ENCODE measurements at regions of chr6 and their contacts with region 1.

Region 1: GRCh38 chr6:134436281-134436815 is 118.4 kb upstream of the SGK1 start:
- DNase-seq: peak in 1 of 9 donors; percentile 65
- ATAC-seq: peak; percentile 84
- H3K4me3 ChIP-seq: peak overlapping the region; percentile 14
- H3K4me3 Mint-ChIP-seq: peak overlapping the region in 2 of 10 donors; percentile 9 to 81
- H3K27ac ChIP-seq: no peak overlapping the region
- H3K27ac Mint-ChIP-seq: peak overlapping the region in 3 of 9 donors; percentile 6 to 94 (median 81)
- H3K4me1 ChIP-seq: no peaks in the 10 kb centered on the region
- H3K4me1 Mint-ChIP-seq: peaks cover 7 to 49% (median 21%) of the 10 kb centered on the region in 7 donors
- H3K27me3 ChIP-seq: no peaks in the 10 kb centered on the region
- H3K27me3 Mint-ChIP-seq: no peaks in the 10 kb centered on the region

Region 2: DNA sequence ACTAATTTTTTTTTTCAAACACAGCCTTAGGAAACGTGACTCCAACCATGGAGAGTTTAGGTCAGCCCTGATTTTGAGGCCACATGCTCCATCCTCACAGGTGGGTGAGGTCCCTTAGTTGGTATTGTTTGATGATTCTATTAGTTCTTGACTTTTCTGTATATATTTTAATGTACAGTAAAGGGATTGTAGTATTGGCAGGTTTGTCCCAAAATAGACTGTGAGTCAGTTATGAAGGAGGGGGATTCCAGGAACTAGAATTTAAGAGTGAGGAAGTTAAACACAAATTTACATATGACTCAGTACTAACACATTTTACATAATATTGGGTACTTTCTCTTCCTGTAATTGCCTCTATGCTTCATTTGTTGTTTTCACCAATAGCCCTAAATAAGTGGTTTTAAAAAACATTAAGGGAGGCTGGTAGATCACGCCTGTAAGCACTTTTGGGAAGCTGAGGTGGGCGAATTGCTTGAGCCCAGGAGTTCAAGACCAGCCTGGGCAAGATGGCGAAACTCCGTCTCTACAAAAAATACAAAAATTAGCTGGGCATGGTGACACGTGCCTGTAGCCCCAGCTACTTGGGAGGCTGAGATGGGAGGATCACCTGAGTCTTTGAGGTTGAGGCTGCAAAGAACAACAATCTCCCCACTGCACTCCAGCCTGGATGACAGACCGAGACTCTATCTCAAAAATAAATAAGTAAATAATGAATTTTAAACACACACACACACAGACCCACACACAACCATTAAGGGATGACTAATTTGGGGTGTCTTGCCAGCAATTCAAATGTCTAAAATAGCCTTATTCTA is 200.2 kb before region 1 on chr6:
- CTCF ChIA-PET with region 1: no interaction called
- POLR2A ChIA-PET with region 1: no interaction called
- intact Hi-C with region 1: loop called in 1 of 2 experiments (anchors 2 kb)
- DNase-seq: no peak
- ATAC-seq: peak; percentile 69
- H3K4me3 ChIP-seq: no peak overlapping the region
- H3K4me3 Mint-ChIP-seq: peak overlapping the region in 2 of 10 donors; percentile 29 to 48
- H3K27ac ChIP-seq: no peak overlapping the region
- H3K27ac Mint-ChIP-seq: peak overlapping the region in 6 of 9 donors; percentile 6 to 86 (median 43)
- H3K4me1 ChIP-seq: peaks cover 18 to 22% of the 10 kb centered on the region in 2 donors
- H3K4me1 Mint-ChIP-seq: peaks cover 8 to 50% (median 43%) of the 10 kb centered on the region in 7 donors
- H3K27me3 ChIP-seq: no peaks in the 10 kb centered on the region
- H3K27me3 Mint-ChIP-seq: no peaks in the 10 kb centered on the region

Region 3: GRCh38 chr6:134352786-134353480 is 83.4 kb before region 1 on chr6:
- CTCF ChIA-PET with region 1: no interaction called
- POLR2A ChIA-PET with region 1: no interaction called
- intact Hi-C with region 1: loop called in 1 of 2 experiments (anchors 5 kb)
- DNase-seq: no peak
- ATAC-seq: no peak
- H3K4me3 ChIP-seq: no peak overlapping the region
- H3K4me3 Mint-ChIP-seq: peak overlapping the region in 7 of 10 donors; percentile 13 to 93 (median 83)
- H3K27ac ChIP-seq: no peak overlapping the region
- H3K27ac Mint-ChIP-seq: peak overlapping the region; percentile 21 to 98 (median 96)
- H3K4me1 ChIP-seq: peaks cover 0 to 18% of the 10 kb centered on the region in 2 donors
- H3K4me1 Mint-ChIP-seq: peaks cover 8 to 34% (median 28%) of the 10 kb centered on the region in 7 donors
- H3K27me3 ChIP-seq: no peaks in the 10 kb centered on the region
- H3K27me3 Mint-ChIP-seq: no peaks in the 10 kb centered on the region

Region 4: GRCh38 chr6:134517145-134517658 is 80.9 kb after region 1 on chr6:
- CTCF ChIA-PET with region 1: no interaction called
- POLR2A ChIA-PET with region 1: no interaction called
- intact Hi-C with region 1: loop called in 1 of 2 experiments (anchors 5 kb)
- DNase-seq: peak in 1 of 9 donors; percentile 20
- ATAC-seq: no peak
- H3K4me3 ChIP-seq: no peak overlapping the region
- H3K4me3 Mint-ChIP-seq: peak overlapping the region in 2 of 10 donors; percentile 1 to 9
- H3K27ac ChIP-seq: no peak overlapping the region
- H3K27ac Mint-ChIP-seq: peak overlapping the region in 7 of 9 donors; percentile 3 to 95 (median 66)
- H3K4me1 ChIP-seq: peaks cover 0 to 24% of the 10 kb centered on the region in 2 donors
- H3K4me1 Mint-ChIP-seq: peaks cover 12 to 48% (median 34%) of the 10 kb centered on the region in 7 donors
- H3K27me3 ChIP-seq: no peaks in the 10 kb centered on the region
- H3K27me3 Mint-ChIP-seq: no peaks in the 10 kb centered on the region

Region 5: GRCh38 chr6:135114355-135115145 is 678.2 kb after region 1 on chr6:
- CTCF ChIA-PET with region 1: no interaction called
- POLR2A ChIA-PET with region 1: no interaction called
- intact Hi-C with region 1: loop called in 1 of 2 experiments (anchors 5 kb)
- DNase-seq: no peak
- ATAC-seq: no peak
- H3K4me3 ChIP-seq: no peak overlapping the region
- H3K4me3 Mint-ChIP-seq: peak overlapping the region in 8 of 10 donors; percentile 7 to 83 (median 36)
- H3K27ac ChIP-seq: no peak overlapping the region
- H3K27ac Mint-ChIP-seq: peak overlapping the region in 7 of 9 donors; percentile 6 to 92 (median 49)
- H3K4me1 ChIP-seq: peaks cover 19 to 42% of the 10 kb centered on the region in 2 donors
- H3K4me1 Mint-ChIP-seq: peaks cover 26 to 88% (median 76%) of the 10 kb centered on the region in 7 donors
- H3K27me3 ChIP-seq: no peaks in the 10 kb centered on the region
- H3K27me3 Mint-ChIP-seq: peaks cover 0 to 7% (median 0%) of the 10 kb centered on the region in 5 donors